Activated T-helper 1 cell treated with anti-CD3 and anti-CD28 coated beads, Interleukin-12 subunit alpha, Interleukin-12 subunit beta, Interleukin-2, Interleukin-4 antibody, amounts not matched to agents 30 ng/mL and 10 ng/mL and 1 ng/mL, durations not matched to agents 14 hours and 24 hours and 36 hours (primary cell): ENCODE measurements at regions of chr18 and their contacts with region 1.

Region 1: DNA sequence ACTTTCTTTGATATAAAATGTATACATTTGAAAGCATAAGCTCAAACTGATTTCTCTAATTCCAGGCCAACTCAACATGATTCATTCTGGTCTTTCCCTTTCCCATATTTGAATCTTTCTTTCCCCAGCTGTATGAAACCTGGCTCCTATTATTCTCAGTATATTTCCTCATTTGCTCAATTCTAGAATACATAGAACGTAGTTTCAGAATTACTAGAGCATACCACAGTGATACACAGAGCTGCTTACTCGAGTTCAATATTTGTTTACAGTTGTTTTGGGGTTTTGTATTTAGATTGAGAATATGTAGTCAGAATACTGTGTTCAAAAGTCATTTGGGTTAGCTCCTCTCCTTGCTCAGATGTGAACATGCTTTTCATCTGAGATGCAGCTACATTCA is 43.0 kb downstream of the TNFRSF11A start:
- DNase-seq: no peak
- H3K4me3 Mint-ChIP-seq: peak overlapping the region; percentile 23
- H3K27ac Mint-ChIP-seq: peak overlapping the region; percentile 85
- H3K4me1 Mint-ChIP-seq: peaks cover 73% of the 10 kb centered on the region
- H3K27me3 Mint-ChIP-seq: no peaks in the 10 kb centered on the region

Region 2: GRCh38 chr18:62226047-62226446 is 142.1 kb before region 1 on chr18:
- intact Hi-C with region 1: no loop called
- DNase-seq: no peak
- H3K4me3 Mint-ChIP-seq: no peak overlapping the region
- H3K27ac Mint-ChIP-seq: no peak overlapping the region
- H3K4me1 Mint-ChIP-seq: no peaks in the 10 kb centered on the region
- H3K27me3 Mint-ChIP-seq: no peaks in the 10 kb centered on the region

Region 3: DNA sequence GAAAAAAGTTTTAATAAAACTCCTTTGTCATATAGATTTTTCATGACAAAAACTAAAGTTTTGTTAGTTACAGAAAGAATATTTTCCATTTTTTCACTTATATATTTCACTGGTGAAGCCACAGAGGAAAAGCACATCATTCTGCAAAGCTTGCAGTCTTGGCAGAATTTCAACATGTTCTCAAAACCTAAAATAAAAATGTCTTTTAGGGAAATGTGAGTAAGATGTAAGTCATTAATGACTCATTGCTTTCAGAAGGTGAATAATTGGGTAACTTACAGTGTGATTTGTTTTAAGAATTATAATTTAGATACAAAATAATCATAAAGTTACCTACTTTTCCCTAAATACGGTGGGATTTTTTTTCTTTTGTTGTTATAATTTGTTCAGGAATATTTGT is 86.4 kb before region 1 on chr18:
- intact Hi-C with region 1: loop called (anchors 5 kb)
- DNase-seq: no peak
- H3K4me3 Mint-ChIP-seq: no peak overlapping the region
- H3K27ac Mint-ChIP-seq: no peak overlapping the region
- H3K4me1 Mint-ChIP-seq: peaks cover 40% of the 10 kb centered on the region
- H3K27me3 Mint-ChIP-seq: no peaks in the 10 kb centered on the region

Region 4: GRCh38 chr18:62324917-62325805 is 42.9 kb before region 1 on chr18 and contains the start of gene TNFRSF11A:
- intact Hi-C with region 1: loop called (anchors 1 kb)
- DNase-seq: peak; percentile 62
- H3K4me3 Mint-ChIP-seq: peak within 1 kb of the TSS; percentile 97
- H3K27ac Mint-ChIP-seq: peak within 1 kb of the TSS; percentile 87
- H3K4me1 Mint-ChIP-seq: peaks cover 62% of the 10 kb centered on the region
- H3K27me3 Mint-ChIP-seq: peaks cover 34% of the 10 kb centered on the region
- total RNA-seq, gene TNFRSF11A: 22.9 and 27.1 TPM in 2 replicates

Region 5: GRCh38 chr18:62339106-62339988 is 28.8 kb before region 1 on chr18:
- intact Hi-C with region 1: loop called (anchors 2 kb)
- DNase-seq: no peak
- H3K4me3 Mint-ChIP-seq: peak overlapping the region; percentile 69
- H3K27ac Mint-ChIP-seq: peak overlapping the region; percentile 89
- H3K4me1 Mint-ChIP-seq: peaks cover 43% of the 10 kb centered on the region
- H3K27me3 Mint-ChIP-seq: no peaks in the 10 kb centered on the region

Region 6: DNA sequence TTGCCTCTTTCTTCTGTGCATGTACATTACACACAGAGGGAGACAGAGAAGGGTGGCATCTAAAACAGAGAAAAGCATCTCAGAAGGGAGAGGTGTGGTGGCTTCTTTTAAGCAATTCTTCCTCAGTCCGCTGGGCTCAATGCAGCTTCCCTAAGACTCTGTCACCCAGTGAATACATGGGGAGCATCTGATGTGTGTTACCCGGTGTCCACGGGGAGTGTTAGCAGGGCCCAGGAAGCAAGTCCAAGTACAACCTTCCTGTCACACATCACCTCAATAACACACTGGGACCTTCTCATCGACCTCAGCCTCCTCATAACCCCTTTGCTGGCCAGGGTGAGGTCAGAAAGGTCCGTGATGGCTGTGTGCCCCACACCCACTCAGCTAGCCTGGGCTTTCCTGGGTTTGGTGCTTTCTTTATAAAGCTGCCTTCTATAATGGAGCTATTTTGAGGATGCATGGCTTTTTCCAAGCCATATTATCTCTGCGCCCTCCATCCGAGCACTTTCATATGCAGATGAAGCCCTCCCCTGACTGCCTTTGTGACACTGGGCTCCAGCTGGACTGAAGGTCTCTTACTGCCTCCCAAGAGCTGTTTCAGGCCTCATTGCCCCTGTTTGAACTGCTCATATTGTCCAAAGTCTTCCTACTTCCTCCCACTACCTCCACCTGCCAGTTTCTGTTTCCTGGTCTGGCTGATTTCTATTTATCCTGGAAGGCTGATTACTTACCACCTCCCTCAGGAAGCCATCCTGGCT is 21.6 kb before region 1 on chr18:
- intact Hi-C with region 1: loop called (anchors 1 kb)
- DNase-seq: no peak
- H3K4me3 Mint-ChIP-seq: peak overlapping the region; percentile 4
- H3K27ac Mint-ChIP-seq: peak overlapping the region; percentile 61
- H3K4me1 Mint-ChIP-seq: peaks cover 52% of the 10 kb centered on the region
- H3K27me3 Mint-ChIP-seq: peaks cover 2% of the 10 kb centered on the region

Region 7: GRCh38 chr18:62399781-62400308 is 31.7 kb after region 1 on chr18:
- intact Hi-C with region 1: loop called (anchors 1 kb)
- DNase-seq: no peak
- H3K4me3 Mint-ChIP-seq: no peak overlapping the region
- H3K27ac Mint-ChIP-seq: peak overlapping the region; percentile 75
- H3K4me1 Mint-ChIP-seq: peaks cover 54% of the 10 kb centered on the region
- H3K27me3 Mint-ChIP-seq: no peaks in the 10 kb centered on the region

Region 8: DNA sequence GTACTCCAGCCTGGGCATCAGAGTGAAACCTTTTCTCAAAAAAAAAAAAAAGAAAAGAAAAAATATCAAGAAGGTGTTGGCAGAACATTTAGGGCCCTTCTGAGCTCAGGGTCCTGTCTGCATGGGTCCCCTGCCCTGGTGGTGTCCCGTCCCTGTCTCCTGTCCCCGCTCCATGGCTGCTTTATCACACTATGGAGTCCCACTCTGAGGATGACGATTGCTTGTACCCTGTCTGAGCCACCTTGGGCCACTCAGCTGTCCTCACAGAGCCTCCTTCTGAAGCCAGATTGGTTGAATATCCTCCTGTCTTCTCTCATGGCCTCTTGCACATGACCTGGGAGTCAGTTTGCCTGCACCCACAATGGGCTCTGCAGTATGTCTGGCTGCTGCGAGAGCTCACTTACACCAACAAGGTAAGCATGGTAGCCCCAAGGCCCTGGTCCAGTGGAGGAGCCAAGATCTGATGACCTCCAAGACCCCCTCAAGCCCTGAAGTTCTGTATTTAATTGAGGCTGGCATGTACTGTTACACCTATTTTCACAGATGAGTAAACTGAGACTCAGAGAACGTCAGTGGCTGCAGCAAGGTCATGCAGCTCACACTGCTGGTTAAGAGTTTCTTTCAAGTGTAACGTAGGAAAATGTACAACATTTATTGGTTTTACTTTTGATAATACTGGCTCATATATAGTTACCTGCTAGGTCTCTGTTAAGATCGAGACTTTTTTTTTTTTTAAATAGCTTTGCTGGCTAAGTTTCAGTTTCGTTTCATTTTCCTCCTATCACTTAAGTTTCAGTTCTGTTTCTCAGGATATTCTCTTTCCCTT is 137.8 kb after region 1 on chr18:
- intact Hi-C with region 1: loop called (anchors 1 kb)
- DNase-seq: peak; percentile 25
- H3K4me3 Mint-ChIP-seq: peak overlapping the region; percentile 81
- H3K27ac Mint-ChIP-seq: peak overlapping the region; percentile 96
- H3K4me1 Mint-ChIP-seq: peaks cover 23% of the 10 kb centered on the region
- H3K27me3 Mint-ChIP-seq: peaks cover 2% of the 10 kb centered on the region